ENCODE measurements at regions of chr2 and their contacts with region 1.

Region 1: GRCh38 chr2:43158259-43158880 is 68.0 kb downstream of the ZFP36L2 start:
- DNase-seq: no peak
- H3K4me3 ChIP-seq: no peak overlapping the region
- H3K27ac ChIP-seq: no peak overlapping the region
- H3K4me1 ChIP-seq: no peaks in the 10 kb centered on the region
- H3K27me3 ChIP-seq: no peaks in the 10 kb centered on the region
- CTCF ChIP-seq: no peak

Region 2: GRCh38 chr2:41989501-41990180 is 1168.7 kb before region 1 on chr2:
- CTCF ChIA-PET with region 1: interaction called, 10 read pairs
- POLR2A ChIA-PET with region 1: no interaction called
- intact Hi-C with region 1: no loop called
- DNase-seq: peak; percentile 96
- H3K4me3 ChIP-seq: peak overlapping the region; percentile 4
- H3K27ac ChIP-seq: peak overlapping the region; percentile 88
- H3K4me1 ChIP-seq: peaks cover 68% of the 10 kb centered on the region
- H3K27me3 ChIP-seq: no peaks in the 10 kb centered on the region
- CTCF ChIP-seq: no peak

Measured in A673 (cell line).